ENCODE measurements at regions of chr18 and their contacts with region 1.

Region 1: GRCh38 chr18:50396005-50396660 is 21.3 kb downstream of the SKA1 start:
- DNase-seq: no peak
- H3K4me3 Mint-ChIP-seq: no peak overlapping the region
- H3K27ac Mint-ChIP-seq: no peak overlapping the region
- H3K4me1 Mint-ChIP-seq: no peaks in the 10 kb centered on the region
- H3K27me3 Mint-ChIP-seq: peaks cover 17% of the 10 kb centered on the region

Region 2: GRCh38 chr18:50374753-50375391 is 21.3 kb before region 1 on chr18 and contains the start of gene SKA1:
- CTCF ChIA-PET with region 1: interaction called, 14 read pairs
- POLR2A ChIA-PET with region 1: no interaction called
- DNase-seq: peak; percentile 92
- H3K4me3 Mint-ChIP-seq: peak within 1 kb of the TSS; percentile 91
- H3K27ac Mint-ChIP-seq: peak within 1 kb of the TSS; percentile 94
- H3K4me1 Mint-ChIP-seq: peaks cover 28% of the 10 kb centered on the region
- H3K27me3 Mint-ChIP-seq: peaks cover under 1% of the 10 kb centered on the region
- total RNA-seq, gene SKA1: 44.1 to 51.4 TPM

Region 3: DNA sequence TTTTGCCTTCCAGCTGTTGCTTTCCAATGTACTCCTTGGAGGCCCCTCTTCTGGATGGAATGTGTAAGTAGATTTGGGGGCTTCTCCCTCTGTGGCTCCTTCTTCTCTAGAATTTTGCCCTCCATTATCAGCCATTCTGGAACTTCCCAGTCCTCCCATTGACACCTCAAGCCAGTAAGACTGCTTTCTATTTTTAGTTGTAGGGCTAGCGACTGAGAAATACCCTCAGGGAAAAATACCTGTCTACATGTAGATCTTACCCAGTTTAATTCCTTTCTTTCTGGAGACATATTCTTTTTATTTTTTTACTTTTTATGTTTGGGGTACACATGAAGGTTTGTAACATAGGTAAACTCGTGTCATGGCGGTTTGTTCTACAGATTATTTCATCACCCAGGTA is 23.0 kb after region 1 on chr18:
- CTCF ChIA-PET with region 1: no interaction called
- POLR2A ChIA-PET with region 1: no interaction called
- DNase-seq: no peak
- H3K4me3 Mint-ChIP-seq: no peak overlapping the region
- H3K27ac Mint-ChIP-seq: no peak overlapping the region
- H3K4me1 Mint-ChIP-seq: no peaks in the 10 kb centered on the region
- H3K27me3 Mint-ChIP-seq: peaks cover 13% of the 10 kb centered on the region

Region 4: DNA sequence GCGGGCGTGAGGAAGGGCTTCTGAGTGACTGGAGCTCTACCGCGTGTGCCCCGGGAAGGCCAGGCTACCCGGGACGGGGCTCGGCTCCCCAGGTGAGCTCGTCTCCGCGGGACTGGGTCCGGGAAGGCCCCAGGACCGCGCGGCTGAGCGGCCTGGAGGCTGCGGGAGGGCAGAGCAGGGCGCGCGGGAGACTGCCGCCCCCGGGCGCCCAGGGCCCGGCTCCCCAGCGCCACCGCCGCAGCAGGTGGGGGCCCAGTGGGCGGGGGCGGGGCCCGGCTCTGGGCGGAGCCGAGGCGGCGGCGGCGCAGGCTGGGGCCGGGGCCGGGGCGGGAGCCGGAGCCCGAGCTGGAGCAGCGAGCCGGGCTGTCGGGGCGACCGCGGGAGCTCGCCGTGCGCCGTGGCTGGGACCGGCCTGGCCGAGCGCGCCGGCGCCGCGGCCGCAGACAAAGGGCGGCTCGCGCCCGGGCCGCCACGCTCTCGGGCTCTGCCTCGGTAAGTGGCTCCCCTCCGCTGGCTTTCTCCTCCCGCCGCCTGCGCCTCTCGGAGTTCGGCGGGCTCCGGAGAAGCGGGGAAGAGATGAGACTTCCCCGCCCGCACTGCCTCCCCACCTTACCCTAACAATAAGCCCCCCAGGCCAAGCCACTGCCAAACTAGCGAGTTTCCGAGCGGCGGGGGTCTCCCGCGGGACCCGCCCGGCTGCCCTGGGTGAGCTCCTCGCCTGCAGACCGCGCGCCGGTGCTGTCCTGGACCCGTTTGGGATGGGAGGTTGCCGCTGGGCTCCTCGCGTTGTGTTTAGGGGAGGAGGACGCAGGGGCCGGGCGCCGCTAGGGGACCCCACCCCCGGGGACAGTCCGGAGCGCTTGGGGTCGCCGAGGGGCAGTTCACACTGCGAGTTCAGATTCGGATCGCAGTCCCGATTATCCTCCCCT is 163.9 kb after region 1 on chr18 and contains the start of gene MAPK4:
- CTCF ChIA-PET with region 1: no interaction called
- POLR2A ChIA-PET with region 1: no interaction called
- DNase-seq: no peak
- H3K4me3 Mint-ChIP-seq: peak within 1 kb of the TSS; percentile 33
- H3K27ac Mint-ChIP-seq: no peak within 1 kb of the TSS
- H3K4me1 Mint-ChIP-seq: peaks cover 4% of the 10 kb centered on the region
- H3K27me3 Mint-ChIP-seq: peaks cover 61% of the 10 kb centered on the region
- total RNA-seq, gene MAPK4: not detected

Region 5: GRCh38 chr18:50769463-50769862 is 373.3 kb after region 1 on chr18:
- CTCF ChIA-PET with region 1: no interaction called
- POLR2A ChIA-PET with region 1: no interaction called
- DNase-seq: no peak
- H3K4me3 Mint-ChIP-seq: no peak overlapping the region
- H3K27ac Mint-ChIP-seq: no peak overlapping the region
- H3K4me1 Mint-ChIP-seq: no peaks in the 10 kb centered on the region
- H3K27me3 Mint-ChIP-seq: peaks cover 16% of the 10 kb centered on the region